ENCODE measurements at regions of chr2 and their contacts with region 1.

Region 1: DNA sequence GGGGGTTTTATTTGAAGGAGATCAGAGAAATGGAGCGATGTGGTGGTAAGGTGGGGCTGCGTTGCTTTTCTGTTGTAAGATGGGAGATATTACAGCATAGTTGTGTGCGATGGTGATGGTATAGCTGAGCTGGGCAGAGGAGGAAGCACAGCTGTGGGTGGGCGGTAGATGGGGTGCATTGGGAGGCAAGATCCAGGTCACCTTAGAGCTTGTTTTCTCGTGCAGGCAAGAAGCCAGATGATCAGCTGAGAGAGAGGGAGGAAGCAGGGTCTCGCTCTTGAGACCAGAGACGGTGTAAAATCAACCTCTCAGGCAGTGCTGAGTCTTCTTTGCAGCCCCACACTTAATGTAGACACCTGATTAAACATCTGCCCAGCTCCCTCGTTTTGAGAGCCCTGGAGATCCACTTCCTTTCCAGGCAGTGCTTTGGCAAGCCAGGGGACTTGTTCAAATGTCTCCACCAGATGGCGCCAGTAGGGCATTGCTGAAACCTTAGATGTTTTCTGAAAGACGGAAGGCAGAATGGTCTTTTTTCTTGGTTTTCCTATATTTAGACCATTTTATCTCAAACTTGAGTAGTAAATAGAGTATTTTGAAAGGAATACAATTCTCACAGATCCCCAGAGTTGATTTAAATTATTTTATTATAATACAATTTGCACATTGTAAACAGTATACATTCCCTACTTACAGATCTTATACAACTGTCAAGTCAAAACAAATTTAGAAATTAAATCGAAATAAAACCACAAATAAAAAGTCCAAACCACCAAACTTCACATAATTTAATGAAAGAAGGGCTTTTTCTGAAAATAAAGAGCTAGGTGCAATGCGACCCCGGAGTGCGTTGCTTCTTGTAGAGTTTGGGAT is 21.1 kb upstream of the LYPD6B start:
- DNase-seq: peak; percentile 80
- H3K4me3 Mint-ChIP-seq: no peak overlapping the region
- H3K27ac Mint-ChIP-seq: no peak overlapping the region
- H3K4me1 Mint-ChIP-seq: peaks cover 1% of the 10 kb centered on the region
- H3K27me3 Mint-ChIP-seq: no peaks in the 10 kb centered on the region

Region 2: DNA sequence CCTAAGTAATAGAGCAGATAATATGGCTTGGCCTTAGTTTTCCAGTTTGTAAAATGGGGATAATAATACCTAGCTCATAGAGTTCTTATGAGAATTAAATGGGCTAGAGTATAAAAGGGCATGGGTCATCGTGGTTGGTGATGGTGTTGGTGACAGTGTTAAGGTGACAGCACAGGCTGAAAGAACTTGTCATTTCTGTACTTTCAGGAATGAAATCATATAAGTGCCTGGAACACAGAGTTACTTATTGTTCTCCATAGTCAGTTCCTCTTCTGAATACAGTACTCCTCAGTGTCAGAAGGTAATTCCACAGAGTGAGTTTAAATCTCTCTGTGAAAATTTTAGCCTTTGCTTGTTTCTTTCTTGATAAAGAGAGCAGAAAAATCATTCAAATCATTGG is 99.9 kb before region 1 on chr2:
- CTCF ChIA-PET with region 1: no interaction called
- POLR2A ChIA-PET with region 1: no interaction called
- intact Hi-C with region 1: no loop called
- DNase-seq: peak; percentile 47
- H3K4me3 Mint-ChIP-seq: no peak overlapping the region
- H3K27ac Mint-ChIP-seq: no peak overlapping the region
- H3K4me1 Mint-ChIP-seq: peaks cover 14% of the 10 kb centered on the region
- H3K27me3 Mint-ChIP-seq: no peaks in the 10 kb centered on the region

Region 3: GRCh38 chr2:149000158-149000938 is 17.0 kb before region 1 on chr2:
- CTCF ChIA-PET with region 1: interaction called, 18 read pairs
- POLR2A ChIA-PET with region 1: no interaction called
- intact Hi-C with region 1: no loop called
- DNase-seq: no peak
- H3K4me3 Mint-ChIP-seq: no peak overlapping the region
- H3K27ac Mint-ChIP-seq: no peak overlapping the region
- H3K4me1 Mint-ChIP-seq: peaks cover 8% of the 10 kb centered on the region
- H3K27me3 Mint-ChIP-seq: no peaks in the 10 kb centered on the region

Region 4: DNA sequence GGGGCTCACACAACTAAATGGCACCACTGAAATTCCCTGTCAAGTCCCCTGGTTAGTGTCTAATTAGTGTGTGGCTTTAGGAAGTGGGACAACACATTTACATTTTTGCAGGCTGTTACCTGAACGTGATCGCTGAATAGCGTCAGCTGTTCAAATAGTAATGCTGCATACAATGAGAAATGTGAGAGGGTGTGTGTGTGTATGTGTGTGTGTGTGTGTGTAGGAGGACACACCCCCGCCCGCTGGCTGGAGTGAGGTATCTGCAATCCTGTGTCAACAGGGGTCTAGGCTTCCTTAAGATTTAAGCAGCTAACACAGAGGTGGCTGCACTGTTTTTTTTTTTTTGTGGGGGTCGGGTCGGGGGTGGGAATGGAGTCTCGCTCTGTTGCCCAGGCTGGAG is 16.4 kb after region 1 on chr2:
- CTCF ChIA-PET with region 1: interaction called, 13 read pairs
- POLR2A ChIA-PET with region 1: no interaction called
- intact Hi-C with region 1: no loop called
- DNase-seq: no peak
- H3K4me3 Mint-ChIP-seq: no peak overlapping the region
- H3K27ac Mint-ChIP-seq: no peak overlapping the region
- H3K4me1 Mint-ChIP-seq: peaks cover 4% of the 10 kb centered on the region
- H3K27me3 Mint-ChIP-seq: peaks cover 26% of the 10 kb centered on the region

Region 5: DNA sequence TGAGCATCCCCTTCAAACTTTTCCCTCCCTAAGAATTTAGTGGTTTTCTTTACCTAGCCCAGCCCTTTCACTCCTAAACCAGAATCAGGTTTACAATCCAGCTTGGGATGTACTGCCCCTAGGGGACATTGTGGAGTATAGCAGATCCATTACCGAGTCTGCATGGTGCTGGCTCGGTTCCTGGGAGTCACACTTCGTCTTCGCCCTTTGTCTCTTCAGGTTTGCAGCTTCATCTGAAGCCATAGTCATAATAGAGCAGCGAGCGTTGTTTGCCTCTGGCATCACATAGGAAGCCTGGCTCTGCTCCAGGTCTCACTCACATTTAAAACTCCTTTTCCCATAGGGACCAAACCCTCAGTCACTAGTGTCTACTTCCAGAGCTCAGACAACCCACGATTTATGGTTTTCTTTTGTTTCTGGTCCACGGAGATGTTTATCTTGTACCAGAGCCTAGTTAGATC is 296.2 kb after region 1 on chr2:
- CTCF ChIA-PET with region 1: interaction called, 33 read pairs
- POLR2A ChIA-PET with region 1: no interaction called
- intact Hi-C with region 1: loop called (anchors 10 kb)
- DNase-seq: no peak
- H3K4me3 Mint-ChIP-seq: no peak overlapping the region
- H3K27ac Mint-ChIP-seq: no peak overlapping the region
- H3K4me1 Mint-ChIP-seq: peaks cover 3% of the 10 kb centered on the region
- H3K27me3 Mint-ChIP-seq: peaks cover 9% of the 10 kb centered on the region

Region 6: GRCh38 chr2:149430743-149431737 is 413.7 kb after region 1 on chr2:
- CTCF ChIA-PET with region 1: no interaction called
- POLR2A ChIA-PET with region 1: no interaction called
- intact Hi-C with region 1: no loop called
- DNase-seq: no peak
- H3K4me3 Mint-ChIP-seq: no peak overlapping the region
- H3K27ac Mint-ChIP-seq: no peak overlapping the region
- H3K4me1 Mint-ChIP-seq: no peaks in the 10 kb centered on the region
- H3K27me3 Mint-ChIP-seq: peaks cover 4% of the 10 kb centered on the region

Region 7: GRCh38 chr2:149572102-149572953 is 555.0 kb after region 1 on chr2:
- CTCF ChIA-PET with region 1: interaction called, 10 read pairs
- POLR2A ChIA-PET with region 1: no interaction called
- intact Hi-C with region 1: no loop called
- DNase-seq: no peak
- H3K4me3 Mint-ChIP-seq: no peak overlapping the region
- H3K27ac Mint-ChIP-seq: peak overlapping the region; percentile 14
- H3K4me1 Mint-ChIP-seq: peaks cover 5% of the 10 kb centered on the region
- H3K27me3 Mint-ChIP-seq: no peaks in the 10 kb centered on the region

Measured in activated CD4-positive, alpha-beta memory T cell treated with anti-CD3 and anti-CD28 coated beads for 36 hours (primary cell).